ENCODE measurements at regions of chr11 and their contacts with region 1.

Region 1: GRCh38 chr11:124800226-124800929 is at the start of gene MSANTD2:
- DNase-seq: peak; percentile 77 to 84 (median 79)
- H3K4me3 ChIP-seq: peak within 1 kb of the TSS; percentile 66 to 93
- H3K4me3 Mint-ChIP-seq: peak within 1 kb of the TSS; percentile 93 to 98 (median 96)
- H3K27ac ChIP-seq: peak within 1 kb of the TSS; percentile 78
- H3K27ac Mint-ChIP-seq: peak within 1 kb of the TSS; percentile 90 to 98 (median 97)
- H3K4me1 ChIP-seq: peaks cover 28% of the 10 kb centered on the region
- H3K4me1 Mint-ChIP-seq: peaks cover 18 to 40% (median 26%) of the 10 kb centered on the region in 4 donors
- H3K27me3 ChIP-seq: no peaks in the 10 kb centered on the region
- H3K27me3 Mint-ChIP-seq: peaks cover 0 to 2% of the 10 kb centered on the region in 2 donors
- total RNA-seq, gene MSANTD2: 25.9 to 26.3 TPM

Region 2: DNA sequence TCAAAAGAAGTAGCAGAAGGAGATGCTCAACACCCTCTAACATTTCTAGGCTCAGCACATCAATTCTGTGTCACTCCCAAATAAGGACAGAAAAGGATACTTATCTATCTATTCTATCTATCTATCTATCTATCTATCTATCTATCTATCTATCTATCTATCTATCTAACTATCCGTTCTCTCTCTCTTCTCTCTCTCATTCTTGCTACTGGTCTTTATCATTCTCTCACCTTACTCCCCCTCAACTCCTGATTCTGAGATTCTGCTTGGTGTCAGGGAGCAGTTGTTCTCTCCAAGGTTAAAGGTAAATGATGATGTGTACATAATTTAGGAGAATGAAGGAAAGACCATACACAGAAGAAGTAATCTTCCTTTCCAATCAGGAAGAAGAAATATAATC is 805.3 kb before region 1 on chr11 and contains the start of gene OR10G6:
- CTCF ChIA-PET with region 1: no interaction called
- POLR2A ChIA-PET with region 1: no interaction called
- intact Hi-C with region 1: no loop called
- DNase-seq: no peak
- H3K4me3 ChIP-seq: no peak within 1 kb of the TSS
- H3K4me3 Mint-ChIP-seq: no peak within 1 kb of the TSS
- H3K27ac ChIP-seq: no peak within 1 kb of the TSS
- H3K27ac Mint-ChIP-seq: peak within 1 kb of the TSS in 1 of 7 donors; percentile 68
- H3K4me1 ChIP-seq: no peaks in the 10 kb centered on the region
- H3K4me1 Mint-ChIP-seq: no peaks in the 10 kb centered on the region
- H3K27me3 ChIP-seq: no peaks in the 10 kb centered on the region
- H3K27me3 Mint-ChIP-seq: peaks cover 0 to 1% of the 10 kb centered on the region in 2 donors
- total RNA-seq, gene OR10G6: not detected

Region 3: DNA sequence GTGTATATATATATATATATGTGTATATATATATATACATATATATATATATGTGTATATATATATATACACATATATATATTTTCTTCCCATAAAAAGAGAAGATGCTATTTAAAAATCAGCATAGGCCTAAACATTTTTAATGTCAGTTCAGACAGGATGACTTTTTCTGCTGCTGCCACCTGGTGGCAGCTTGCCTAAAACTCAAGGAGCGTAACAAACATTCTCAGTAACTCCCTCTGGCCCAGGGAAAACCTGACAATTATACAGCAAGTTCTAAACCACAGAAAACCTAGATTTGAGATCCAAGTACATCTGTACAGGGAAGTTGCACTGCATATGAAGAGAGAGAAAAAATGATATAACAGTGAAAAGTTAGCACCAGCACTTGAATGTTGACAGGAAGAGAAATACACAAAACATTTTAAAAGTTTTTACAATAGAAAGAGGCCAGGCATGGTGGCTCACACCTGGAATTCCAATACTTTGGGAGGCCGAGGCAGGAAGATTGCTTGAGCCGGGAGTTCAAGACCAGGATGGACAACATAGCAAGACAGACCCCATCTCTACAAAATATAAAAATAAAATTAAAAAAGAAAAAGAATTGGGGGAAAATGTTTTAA is 214.0 kb before region 1 on chr11:
- CTCF ChIA-PET with region 1: no interaction called
- POLR2A ChIA-PET with region 1: no interaction called
- intact Hi-C with region 1: no loop called
- DNase-seq: peak in 4 of 5 donors; percentile 8 to 22 (median 16)
- H3K4me3 ChIP-seq: no peak overlapping the region
- H3K4me3 Mint-ChIP-seq: no peak overlapping the region
- H3K27ac ChIP-seq: no peak overlapping the region
- H3K27ac Mint-ChIP-seq: no peak overlapping the region
- H3K4me1 ChIP-seq: no peaks in the 10 kb centered on the region
- H3K4me1 Mint-ChIP-seq: no peaks in the 10 kb centered on the region
- H3K27me3 ChIP-seq: no peaks in the 10 kb centered on the region
- H3K27me3 Mint-ChIP-seq: peaks cover 14 to 16% of the 10 kb centered on the region in 2 donors

Region 4: GRCh38 chr11:124622531-124623451 is 177.6 kb before region 1 on chr11 and contains the start of gene TBRG1:
- CTCF ChIA-PET with region 1: interaction called, 3 read pairs
- POLR2A ChIA-PET with region 1: interaction called, 11 read pairs
- intact Hi-C with region 1: no loop called
- DNase-seq: peak; percentile 76 to 88 (median 82)
- H3K4me3 ChIP-seq: peak within 1 kb of the TSS; percentile 63 to 86
- H3K4me3 Mint-ChIP-seq: peak within 1 kb of the TSS; percentile 93 to 100 (median 98)
- H3K27ac ChIP-seq: peak within 1 kb of the TSS; percentile 95
- H3K27ac Mint-ChIP-seq: peak within 1 kb of the TSS; percentile 92 to 100 (median 99)
- H3K4me1 ChIP-seq: peaks cover 34% of the 10 kb centered on the region
- H3K4me1 Mint-ChIP-seq: peaks cover 23 to 53% (median 38%) of the 10 kb centered on the region in 4 donors
- H3K27me3 ChIP-seq: no peaks in the 10 kb centered on the region
- H3K27me3 Mint-ChIP-seq: peaks cover 1 to 6% of the 10 kb centered on the region in 2 donors
- total RNA-seq, gene TBRG1: 69.3 to 75.8 TPM

Region 5: DNA sequence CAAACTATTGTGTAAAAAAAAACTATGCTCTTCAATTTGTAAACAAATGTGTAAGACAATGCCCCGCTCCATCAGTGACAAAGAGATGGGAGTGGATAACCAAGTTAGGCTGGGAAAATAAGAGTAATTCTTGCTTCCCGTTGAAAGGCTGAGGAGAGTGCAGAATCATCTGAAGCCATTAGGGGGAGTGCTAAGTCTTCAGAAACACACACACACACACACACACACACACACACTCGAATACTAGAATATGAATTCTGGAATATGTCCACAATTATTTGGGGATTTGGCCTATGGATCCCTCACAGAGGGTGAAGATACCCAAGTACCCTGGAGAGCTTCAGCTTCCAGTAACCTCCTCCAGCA is 37.1 kb after region 1 on chr11:
- CTCF ChIA-PET with region 1: interaction called, 98 read pairs
- POLR2A ChIA-PET with region 1: interaction called, 5 read pairs
- intact Hi-C with region 1: loop called (anchors 2 kb)
- DNase-seq: peak in 1 of 5 donors; percentile 10
- H3K4me3 ChIP-seq: no peak overlapping the region
- H3K4me3 Mint-ChIP-seq: peak overlapping the region in 1 of 8 donors; percentile 84
- H3K27ac ChIP-seq: no peak overlapping the region
- H3K27ac Mint-ChIP-seq: peak overlapping the region in 1 of 7 donors; percentile 74
- H3K4me1 ChIP-seq: peaks cover 10% of the 10 kb centered on the region
- H3K4me1 Mint-ChIP-seq: peaks cover 8 to 21% (median 14%) of the 10 kb centered on the region in 4 donors
- H3K27me3 ChIP-seq: peaks cover 41% of the 10 kb centered on the region
- H3K27me3 Mint-ChIP-seq: peaks cover 43 to 70% of the 10 kb centered on the region in 2 donors

Measured in CD4-positive, alpha-beta memory T cell (primary cell).